ENCODE measurements at regions of chr19 and their contacts with region 1.

Region 1: GRCh38 chr19:36489118-36489919 is at the start of gene ZNF566:
- DNase-seq: peak; percentile 74 to 98 (median 94)
- ATAC-seq: peak; percentile 95
- H3K4me3 ChIP-seq: peak within 1 kb of the TSS; percentile 97
- H3K4me3 Mint-ChIP-seq: peak within 1 kb of the TSS; percentile 93 to 99 (median 98)
- H3K27ac ChIP-seq: peak within 1 kb of the TSS; percentile 90
- H3K27ac Mint-ChIP-seq: peak within 1 kb of the TSS; percentile 93 to 99 (median 98)
- H3K4me1 ChIP-seq: peaks cover 9 to 10% of the 10 kb centered on the region in 2 donors
- H3K4me1 Mint-ChIP-seq: peaks cover 22 to 43% (median 30%) of the 10 kb centered on the region in 7 donors
- H3K27me3 ChIP-seq: no peaks in the 10 kb centered on the region
- H3K27me3 Mint-ChIP-seq: no peaks in the 10 kb centered on the region
- total RNA-seq, gene ZNF566: 9.2 to 29.8 (median 9.3) TPM

Region 2: DNA sequence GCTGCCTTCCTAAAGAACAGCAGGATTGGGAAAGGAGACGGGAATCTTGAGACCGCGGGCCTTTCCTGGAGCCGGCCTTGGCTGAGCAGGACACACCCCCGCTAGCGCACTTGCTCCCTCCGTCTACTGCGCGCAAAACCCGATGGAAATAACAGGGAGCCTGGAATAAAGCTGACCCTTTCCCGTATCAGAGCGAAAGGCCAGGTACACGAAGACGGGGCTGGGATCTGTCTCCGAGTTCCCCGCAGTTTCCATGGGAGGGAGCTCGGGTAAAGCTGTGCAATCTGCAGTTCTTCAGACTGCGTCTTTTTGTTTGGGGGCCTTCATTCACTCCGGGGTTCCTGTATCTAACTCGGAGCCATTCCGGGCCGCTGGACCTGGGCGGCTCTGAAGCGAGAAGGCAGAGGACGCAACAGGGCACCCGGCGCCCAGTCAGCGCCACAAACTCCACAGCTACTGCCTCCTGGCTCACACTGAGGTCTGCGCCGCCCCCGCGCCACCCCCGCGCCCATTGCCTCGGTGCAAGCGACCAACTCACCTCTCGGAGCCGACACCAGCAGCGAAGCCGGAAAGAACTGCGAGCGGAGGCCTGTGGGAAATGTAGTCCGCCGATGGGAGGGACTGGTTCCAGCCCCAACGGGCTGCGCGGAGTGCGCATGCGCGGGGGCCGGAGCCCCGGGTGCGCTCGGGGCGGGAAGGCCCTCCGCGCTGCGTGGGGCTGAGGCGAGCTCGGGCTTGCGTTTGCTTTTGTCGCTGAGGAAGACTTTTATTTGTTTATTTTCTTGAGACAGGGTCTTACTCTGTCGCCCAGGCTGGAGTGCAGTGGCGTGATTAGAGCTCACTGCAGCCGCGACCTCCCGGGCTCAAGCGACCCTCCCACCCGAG is 110.5 kb before region 1 on chr19 and contains the start of gene ZFP14:
- CTCF ChIA-PET with region 1: interaction called, 4 read pairs
- POLR2A ChIA-PET with region 1: interaction called, 4 read pairs
- intact Hi-C with region 1: loop called (anchors 1 kb)
- DNase-seq: peak; percentile 86 to 95 (median 93)
- ATAC-seq: peak; percentile 99
- H3K4me3 ChIP-seq: peak within 1 kb of the TSS; percentile 86
- H3K4me3 Mint-ChIP-seq: peak within 1 kb of the TSS; percentile 82 to 98 (median 94)
- H3K27ac ChIP-seq: peak within 1 kb of the TSS; percentile 86
- H3K27ac Mint-ChIP-seq: peak within 1 kb of the TSS; percentile 55 to 98 (median 94)
- H3K4me1 ChIP-seq: peaks cover 0 to 10% of the 10 kb centered on the region in 2 donors
- H3K4me1 Mint-ChIP-seq: peaks cover 9 to 23% (median 21%) of the 10 kb centered on the region in 7 donors
- H3K27me3 ChIP-seq: no peaks in the 10 kb centered on the region
- H3K27me3 Mint-ChIP-seq: no peaks in the 10 kb centered on the region
- total RNA-seq, gene ZFP14: 5.3 to 24.0 (median 9.2) TPM

Region 3: GRCh38 chr19:36409841-36410240 is 79.5 kb before region 1 on chr19:
- CTCF ChIA-PET with region 1: no interaction called
- POLR2A ChIA-PET with region 1: no interaction called
- intact Hi-C with region 1: no loop called
- DNase-seq: no peak
- ATAC-seq: no peak
- H3K4me3 ChIP-seq: no peak overlapping the region
- H3K4me3 Mint-ChIP-seq: peak overlapping the region in 1 of 10 donors; percentile 14
- H3K27ac ChIP-seq: no peak overlapping the region
- H3K27ac Mint-ChIP-seq: no peak overlapping the region
- H3K4me1 ChIP-seq: no peaks in the 10 kb centered on the region
- H3K4me1 Mint-ChIP-seq: peaks cover 0 to 5% (median 0%) of the 10 kb centered on the region in 7 donors
- H3K27me3 ChIP-seq: no peaks in the 10 kb centered on the region
- H3K27me3 Mint-ChIP-seq: no peaks in the 10 kb centered on the region

Region 4: DNA sequence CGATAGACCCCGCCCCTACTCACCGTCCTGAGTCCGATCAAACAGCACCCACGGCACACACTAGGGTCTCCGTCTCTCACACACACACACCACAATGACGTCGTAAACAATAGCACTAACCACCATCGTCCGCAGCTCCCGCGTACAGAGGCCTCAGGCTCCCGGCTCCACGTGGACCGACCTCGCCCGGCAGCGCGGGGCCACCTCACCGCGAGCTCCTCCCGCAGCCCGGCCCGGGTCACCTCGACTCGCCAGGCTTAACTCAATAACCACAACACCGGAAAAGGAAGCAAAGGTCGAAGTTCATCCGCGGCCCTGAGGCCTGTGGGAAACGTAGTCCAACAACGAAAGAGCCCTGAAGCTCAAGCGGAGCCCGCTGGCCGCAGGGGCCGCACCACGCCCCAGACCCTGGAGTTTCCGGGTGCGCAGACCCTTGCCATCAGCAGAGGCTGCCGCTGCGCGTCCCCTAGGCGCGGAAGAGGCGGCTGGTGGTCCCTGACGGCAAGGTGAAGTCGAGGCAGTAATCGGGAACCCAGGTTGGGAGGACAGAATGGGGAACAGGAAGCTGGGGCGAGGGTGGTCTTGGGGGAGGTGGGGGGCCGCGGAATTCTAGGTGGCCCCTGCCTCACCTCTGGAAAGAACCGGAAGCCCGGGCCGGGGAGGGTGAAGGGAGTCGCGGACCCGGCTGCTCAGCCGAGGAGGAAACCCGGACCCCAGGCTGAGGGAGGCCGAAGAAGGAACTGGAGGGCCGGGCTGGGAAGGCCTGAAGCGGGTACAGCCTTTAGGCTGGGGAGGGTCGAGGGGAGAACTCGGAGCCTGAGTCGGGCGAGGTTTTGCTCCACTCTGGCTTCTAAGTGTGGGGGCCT is 83.9 kb after region 1 on chr19 and contains the start of gene ZNF529:
- CTCF ChIA-PET with region 1: no interaction called
- POLR2A ChIA-PET with region 1: interaction called, 10 read pairs
- intact Hi-C with region 1: loop called (anchors 1 to 2 kb)
- DNase-seq: peak; percentile 67 to 95 (median 85)
- ATAC-seq: peak; percentile 95
- H3K4me3 ChIP-seq: peak within 1 kb of the TSS; percentile 95
- H3K4me3 Mint-ChIP-seq: peak within 1 kb of the TSS; percentile 80 to 100 (median 93)
- H3K27ac ChIP-seq: peak within 1 kb of the TSS; percentile 98
- H3K27ac Mint-ChIP-seq: peak within 1 kb of the TSS; percentile 94 to 100 (median 98)
- H3K4me1 ChIP-seq: peaks cover 0 to 15% of the 10 kb centered on the region in 2 donors
- H3K4me1 Mint-ChIP-seq: peaks cover 23 to 46% (median 40%) of the 10 kb centered on the region in 7 donors
- H3K27me3 ChIP-seq: no peaks in the 10 kb centered on the region
- H3K27me3 Mint-ChIP-seq: no peaks in the 10 kb centered on the region
- total RNA-seq, gene ZNF529: 22.6 to 37.8 (median 33.8) TPM

Region 5: GRCh38 chr19:36665832-36666231 is 176.5 kb after region 1 on chr19:
- CTCF ChIA-PET with region 1: no interaction called
- POLR2A ChIA-PET with region 1: no interaction called
- intact Hi-C with region 1: loop called in 1 of 2 experiments (anchors 1 kb)
- DNase-seq: peak in 1 of 9 donors; percentile 2
- ATAC-seq: no peak
- H3K4me3 ChIP-seq: peak overlapping the region; percentile 88
- H3K4me3 Mint-ChIP-seq: peak overlapping the region; percentile 91 to 100 (median 98)
- H3K27ac ChIP-seq: no peak overlapping the region
- H3K27ac Mint-ChIP-seq: peak overlapping the region; percentile 29 to 99 (median 93)
- H3K4me1 ChIP-seq: peaks cover 0 to 10% of the 10 kb centered on the region in 2 donors
- H3K4me1 Mint-ChIP-seq: peaks cover 17 to 42% (median 35%) of the 10 kb centered on the region in 7 donors
- H3K27me3 ChIP-seq: no peaks in the 10 kb centered on the region
- H3K27me3 Mint-ChIP-seq: no peaks in the 10 kb centered on the region

Region 6: GRCh38 chr19:36837906-36838783 is 348.8 kb after region 1 on chr19 and contains the start of gene ZNF790:
- CTCF ChIA-PET with region 1: no interaction called
- POLR2A ChIA-PET with region 1: interaction called, 7 read pairs
- intact Hi-C with region 1: loop called (anchors 1 kb)
- DNase-seq: peak; percentile 68 to 91 (median 85)
- ATAC-seq: peak; percentile 95
- H3K4me3 ChIP-seq: peak within 1 kb of the TSS; percentile 92
- H3K4me3 Mint-ChIP-seq: peak within 1 kb of the TSS in 1 of 10 donors; percentile 22
- H3K27ac ChIP-seq: peak within 1 kb of the TSS; percentile 92
- H3K27ac Mint-ChIP-seq: peak within 1 kb of the TSS in 5 of 9 donors; percentile 39 to 65 (median 51)
- H3K4me1 ChIP-seq: peaks cover 6 to 11% of the 10 kb centered on the region in 2 donors
- H3K4me1 Mint-ChIP-seq: peaks cover 0 to 21% (median 14%) of the 10 kb centered on the region in 7 donors
- H3K27me3 ChIP-seq: no peaks in the 10 kb centered on the region
- H3K27me3 Mint-ChIP-seq: no peaks in the 10 kb centered on the region
- total RNA-seq, gene ZNF790: 2.6 to 14.4 (median 7.3) TPM

Region 7: DNA sequence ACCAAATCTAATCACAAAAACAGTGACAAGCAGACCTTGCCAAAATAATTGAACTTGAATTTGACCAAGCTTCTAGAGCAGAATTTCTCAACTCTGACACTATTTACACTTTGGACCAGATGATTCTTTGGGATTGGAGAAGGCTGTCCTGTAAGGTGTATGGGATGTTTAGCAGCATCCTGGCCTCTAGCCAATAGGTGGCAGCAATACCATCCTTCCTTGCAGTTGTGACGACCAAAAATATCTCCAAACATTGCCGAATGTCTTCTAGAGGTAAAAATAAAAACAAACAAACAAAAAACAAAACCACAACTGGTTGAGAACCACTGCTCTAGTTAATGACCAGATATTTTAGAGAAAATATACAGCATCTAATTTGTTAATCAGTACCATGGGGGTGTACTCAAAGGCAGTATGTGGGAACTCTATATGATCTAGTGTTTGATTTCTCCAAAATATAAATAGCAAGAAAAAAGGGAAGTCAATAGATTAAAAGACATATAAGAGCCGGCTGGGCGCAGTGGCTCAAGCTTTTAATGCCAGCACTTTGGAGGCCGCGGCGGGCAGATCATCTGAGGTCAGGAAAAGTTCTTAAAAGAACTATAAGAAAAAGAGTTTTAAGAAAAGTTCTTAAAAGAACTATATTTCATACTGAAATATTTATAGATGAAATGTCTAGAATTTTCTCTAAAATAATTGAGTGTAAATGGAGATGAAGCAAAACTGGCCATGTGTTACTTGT is 820.7 kb after region 1 on chr19:
- CTCF ChIA-PET with region 1: no interaction called
- POLR2A ChIA-PET with region 1: no interaction called
- intact Hi-C with region 1: loop called in 1 of 2 experiments (anchors 10 kb)
- DNase-seq: peak in 3 of 9 donors; percentile 18 to 38 (median 32)
- ATAC-seq: peak; percentile 36
- H3K4me3 ChIP-seq: no peak overlapping the region
- H3K4me3 Mint-ChIP-seq: no peak overlapping the region
- H3K27ac ChIP-seq: no peak overlapping the region
- H3K27ac Mint-ChIP-seq: peak overlapping the region in 1 of 9 donors; percentile 28
- H3K4me1 ChIP-seq: peaks cover 0 to 5% of the 10 kb centered on the region in 2 donors
- H3K4me1 Mint-ChIP-seq: peaks cover 0 to 21% (median 13%) of the 10 kb centered on the region in 7 donors
- H3K27me3 ChIP-seq: no peaks in the 10 kb centered on the region
- H3K27me3 Mint-ChIP-seq: peaks cover 0 to 27% (median 19%) of the 10 kb centered on the region in 5 donors